ENCODE measurements at regions of chr15 and their contacts with region 1.

Region 1: GRCh38 chr15:85380217-85380811 is at the start of gene AKAP13:
- DNase-seq: peak; percentile 92 to 98 (median 96)
- H3K4me3 ChIP-seq: peak within 1 kb of the TSS; percentile 10 to 59
- H3K4me3 Mint-ChIP-seq: peak within 1 kb of the TSS; percentile 88 to 96 (median 91)
- H3K27ac ChIP-seq: peak within 1 kb of the TSS; percentile 85
- H3K27ac Mint-ChIP-seq: peak within 1 kb of the TSS; percentile 88 to 98 (median 96)
- H3K4me1 ChIP-seq: peaks cover 59% of the 10 kb centered on the region
- H3K4me1 Mint-ChIP-seq: peaks cover 43 to 63% (median 51%) of the 10 kb centered on the region in 4 donors
- H3K27me3 ChIP-seq: no peaks in the 10 kb centered on the region
- H3K27me3 Mint-ChIP-seq: no peaks in the 10 kb centered on the region
- total RNA-seq, gene AKAP13: 300 to 319 TPM

Region 2: GRCh38 chr15:84981054-84981710 is 399.1 kb before region 1 on chr15:
- CTCF ChIA-PET with region 1: no interaction called
- POLR2A ChIA-PET with region 1: no interaction called
- intact Hi-C with region 1: loop called (anchors 2 kb)
- DNase-seq: peak; percentile 95 to 99 (median 98)
- H3K4me3 ChIP-seq: peak overlapping the region; percentile 43 to 86
- H3K4me3 Mint-ChIP-seq: peak overlapping the region; percentile 89 to 98 (median 95)
- H3K27ac ChIP-seq: peak overlapping the region; percentile 83
- H3K27ac Mint-ChIP-seq: peak overlapping the region; percentile 94 to 98 (median 97)
- H3K4me1 ChIP-seq: peaks cover 42% of the 10 kb centered on the region
- H3K4me1 Mint-ChIP-seq: peaks cover 24 to 51% (median 38%) of the 10 kb centered on the region in 4 donors
- H3K27me3 ChIP-seq: no peaks in the 10 kb centered on the region
- H3K27me3 Mint-ChIP-seq: no peaks in the 10 kb centered on the region

Region 3: DNA sequence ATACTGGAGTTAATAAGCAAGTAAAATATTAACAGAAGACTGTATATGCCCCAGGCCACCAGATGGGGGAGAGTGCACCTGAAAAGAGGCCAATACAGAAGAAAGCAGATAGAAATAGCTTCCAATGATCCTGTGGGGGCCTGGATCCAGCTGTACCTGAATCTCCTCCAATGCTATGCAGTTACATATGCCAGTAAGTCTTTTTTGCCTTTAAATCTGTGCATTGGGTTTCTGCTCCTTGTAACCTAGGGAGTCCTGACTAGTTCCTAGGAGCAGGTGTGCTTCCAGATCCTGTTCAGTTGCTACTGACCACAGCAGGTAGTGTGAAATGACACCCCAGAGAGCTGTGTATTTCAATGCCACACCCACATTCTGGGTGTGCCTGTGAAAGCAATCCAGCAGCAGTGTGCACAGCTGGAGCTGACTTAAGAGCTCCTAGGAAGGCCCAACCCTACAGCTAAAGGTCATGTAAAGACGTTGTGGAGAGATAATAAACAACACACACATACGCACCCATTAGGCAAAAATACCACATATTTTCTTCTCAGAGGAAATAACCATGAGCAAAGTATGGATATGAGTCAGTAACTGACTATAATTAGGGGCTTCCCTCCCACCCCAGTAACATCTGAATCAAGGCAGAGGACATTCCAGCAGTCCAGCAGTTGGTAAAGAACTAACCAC is 62.1 kb before region 1 on chr15:
- CTCF ChIA-PET with region 1: interaction called, 6 read pairs
- POLR2A ChIA-PET with region 1: interaction called, 14 read pairs
- intact Hi-C with region 1: loop called (anchors 5 kb)
- DNase-seq: peak in 3 of 5 donors; percentile 10 to 49 (median 29)
- H3K4me3 ChIP-seq: no peak overlapping the region
- H3K4me3 Mint-ChIP-seq: peak overlapping the region in 4 of 8 donors; percentile 35 to 62 (median 51)
- H3K27ac ChIP-seq: no peak overlapping the region
- H3K27ac Mint-ChIP-seq: peak overlapping the region in 6 of 7 donors; percentile 79 to 90 (median 82)
- H3K4me1 ChIP-seq: peaks cover 42% of the 10 kb centered on the region
- H3K4me1 Mint-ChIP-seq: peaks cover 32 to 47% (median 38%) of the 10 kb centered on the region in 4 donors
- H3K27me3 ChIP-seq: no peaks in the 10 kb centered on the region
- H3K27me3 Mint-ChIP-seq: no peaks in the 10 kb centered on the region

Region 4: GRCh38 chr15:85412956-85413854 is 32.9 kb after region 1 on chr15:
- CTCF ChIA-PET with region 1: interaction called, 12 read pairs
- POLR2A ChIA-PET with region 1: interaction called, 44 read pairs
- intact Hi-C with region 1: loop called (anchors 1 kb)
- DNase-seq: peak; percentile 45 to 86 (median 54)
- H3K4me3 ChIP-seq: no peak overlapping the region
- H3K4me3 Mint-ChIP-seq: peak overlapping the region in 7 of 8 donors; percentile 47 to 87 (median 65)
- H3K27ac ChIP-seq: peak overlapping the region; percentile 40
- H3K27ac Mint-ChIP-seq: peak overlapping the region; percentile 78 to 96 (median 92)
- H3K4me1 ChIP-seq: peaks cover 32% of the 10 kb centered on the region
- H3K4me1 Mint-ChIP-seq: peaks cover 50 to 75% (median 58%) of the 10 kb centered on the region in 4 donors
- H3K27me3 ChIP-seq: no peaks in the 10 kb centered on the region
- H3K27me3 Mint-ChIP-seq: no peaks in the 10 kb centered on the region

Region 5: DNA sequence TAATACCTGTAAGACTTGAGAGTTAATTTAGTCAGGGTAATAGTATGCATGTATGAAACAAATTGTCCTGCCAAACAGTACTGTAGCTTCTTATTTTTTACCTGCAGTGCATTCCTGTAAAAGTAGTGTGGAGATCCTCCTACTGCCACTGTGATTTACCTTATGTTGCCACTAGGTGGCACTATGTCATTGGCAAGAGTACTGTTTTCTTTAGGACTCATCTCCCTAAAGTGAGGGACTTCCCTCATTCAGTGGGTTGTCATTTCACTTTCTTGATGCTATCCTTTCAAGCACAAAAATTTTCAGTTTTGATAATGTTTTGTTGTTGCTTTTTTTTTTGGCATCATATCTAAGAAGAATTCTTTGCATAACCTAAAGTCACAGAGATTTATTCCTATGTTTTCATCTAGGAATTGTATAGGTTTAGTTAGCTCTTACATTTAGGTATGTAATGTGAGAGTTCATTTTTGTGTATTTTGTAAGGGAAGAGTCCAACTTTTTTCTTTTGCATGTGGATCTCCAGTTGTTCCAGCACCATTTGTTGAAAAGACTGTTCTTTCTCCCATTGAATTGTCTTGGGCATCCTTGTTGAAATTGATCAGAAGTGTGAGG is 105.7 kb after region 1 on chr15:
- CTCF ChIA-PET with region 1: interaction called, 5 read pairs
- POLR2A ChIA-PET with region 1: interaction called, 3 read pairs
- intact Hi-C with region 1: loop called (anchors 1 kb)
- DNase-seq: peak; percentile 65 to 73 (median 70)
- H3K4me3 ChIP-seq: no peak overlapping the region
- H3K4me3 Mint-ChIP-seq: peak overlapping the region in 1 of 8 donors; percentile 12
- H3K27ac ChIP-seq: no peak overlapping the region
- H3K27ac Mint-ChIP-seq: peak overlapping the region in 4 of 7 donors; percentile 1 to 63 (median 22)
- H3K4me1 ChIP-seq: peaks cover 41% of the 10 kb centered on the region
- H3K4me1 Mint-ChIP-seq: peaks cover 49 to 79% (median 65%) of the 10 kb centered on the region in 4 donors
- H3K27me3 ChIP-seq: no peaks in the 10 kb centered on the region
- H3K27me3 Mint-ChIP-seq: no peaks in the 10 kb centered on the region

Measured in CD4-positive, alpha-beta memory T cell (primary cell).